ENCODE measurements at regions of chr15 and their contacts with region 1.

Region 1: DNA sequence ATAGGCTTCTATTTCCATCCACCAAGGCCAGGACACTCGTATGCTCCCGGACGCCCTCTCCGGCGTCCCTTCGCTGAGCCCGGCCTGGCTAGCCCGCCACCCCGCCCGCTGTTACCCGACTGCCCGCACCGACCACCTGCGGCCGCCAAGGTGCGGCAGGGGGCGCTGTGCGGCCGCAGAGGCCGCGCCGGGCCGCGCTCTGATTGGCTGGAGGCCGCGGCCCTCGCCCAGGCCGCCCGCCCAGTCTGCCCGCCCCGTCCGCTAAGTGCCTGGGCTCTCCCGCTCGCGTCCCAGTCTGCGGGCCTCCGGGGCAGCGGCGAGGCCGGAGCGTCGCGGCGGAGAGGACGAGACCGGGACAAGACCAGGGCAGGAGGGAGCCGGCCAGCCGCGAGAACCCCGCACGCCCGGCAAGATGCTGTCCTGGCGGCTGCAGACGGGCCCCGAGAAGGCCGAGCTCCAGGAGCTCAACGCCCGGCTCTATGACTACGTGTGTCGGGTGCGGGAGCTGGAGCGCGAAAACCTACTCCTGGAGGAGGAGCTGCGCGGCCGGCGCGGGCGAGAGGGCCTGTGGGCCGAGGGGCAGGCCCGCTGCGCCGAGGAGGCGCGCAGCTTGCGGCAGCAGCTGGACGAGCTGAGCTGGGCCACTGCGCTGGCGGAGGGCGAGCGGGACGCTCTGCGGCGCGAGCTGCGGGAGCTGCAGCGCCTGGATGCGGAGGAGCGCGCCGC is at the start of gene SYNM:
- DNase-seq: peak; percentile 85
- ATAC-seq: peak; percentile 80
- total RNA-seq, gene SYNM: 33.7 TPM

Region 2: DNA sequence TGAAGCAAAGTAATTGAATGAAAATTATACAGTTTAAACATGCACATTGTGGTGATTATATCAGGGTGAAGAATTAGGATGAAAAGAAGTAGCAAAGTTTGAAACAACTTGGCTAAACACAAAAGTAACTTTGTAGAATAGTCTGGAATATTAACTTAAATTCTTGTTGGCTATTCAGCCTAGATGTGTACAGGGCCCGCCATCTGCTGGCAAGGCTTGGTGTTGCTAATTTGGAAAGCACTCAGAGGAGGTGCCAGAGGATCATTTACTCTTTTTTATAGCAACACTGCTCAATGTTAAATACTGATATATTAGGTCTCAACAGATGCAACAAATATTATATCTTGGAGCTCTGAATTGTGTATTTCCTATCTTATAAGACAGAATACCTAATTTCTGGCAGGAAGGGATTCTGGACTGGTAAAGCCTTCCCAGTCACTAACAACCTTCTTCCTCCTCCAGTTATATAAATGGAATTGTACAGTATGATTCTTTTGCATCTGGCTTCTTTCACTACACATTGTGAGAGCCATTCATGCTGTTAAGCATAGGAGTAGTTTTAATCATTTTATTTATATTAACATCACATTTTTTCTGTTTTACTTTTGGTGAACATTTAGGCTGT is 108.3 kb after region 1 on chr15:
- intact Hi-C with region 1: loop called (anchors 5 kb)
- DNase-seq: peak; percentile 92
- ATAC-seq: peak; percentile 88

Region 3: DNA sequence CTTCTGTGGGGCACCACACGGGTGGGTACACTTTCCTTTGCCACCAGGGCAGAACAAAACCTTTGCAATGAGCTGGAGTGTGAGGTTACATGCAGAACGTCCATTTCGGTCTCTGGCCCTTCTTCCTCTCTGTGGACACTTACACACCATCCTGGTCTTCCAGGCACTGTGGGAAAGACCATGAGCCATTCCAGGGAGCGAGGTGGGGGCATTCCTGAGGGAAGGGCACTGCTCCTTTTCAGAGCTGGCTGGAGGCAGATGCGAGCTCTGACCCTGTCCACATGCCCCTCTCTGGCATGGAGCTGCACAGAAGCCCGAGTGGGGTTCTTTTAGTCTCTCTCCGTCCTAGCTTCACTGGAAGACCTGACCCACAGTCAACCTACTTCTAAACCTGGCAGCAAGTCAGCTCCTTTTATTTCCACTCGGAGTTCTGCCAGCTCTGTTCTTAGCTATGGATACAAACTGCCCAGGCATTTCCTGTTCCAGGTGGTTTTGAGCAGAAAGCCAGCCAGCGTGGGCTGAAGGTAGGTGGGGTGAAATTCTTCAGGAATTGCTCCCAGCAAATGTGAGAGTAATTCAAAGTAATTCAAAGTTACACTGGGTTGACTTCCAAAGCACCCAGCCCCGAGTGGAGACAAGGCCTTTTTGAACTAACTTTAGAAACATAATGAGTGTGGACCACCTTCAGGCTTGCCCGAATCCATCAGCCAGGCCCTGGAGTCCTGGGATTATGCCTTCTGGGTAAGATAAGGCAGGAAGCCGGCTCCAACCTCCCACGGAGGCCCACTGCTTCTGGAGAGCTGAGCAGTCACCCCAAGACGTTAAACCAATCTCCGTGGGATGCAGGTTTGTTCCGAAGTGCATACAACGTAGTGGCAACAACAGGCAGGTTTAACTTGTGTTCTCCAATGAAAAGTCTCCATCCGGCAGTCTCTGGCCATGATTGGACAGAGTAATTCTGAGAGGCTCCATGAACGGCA is 955.6 kb after region 1 on chr15:
- intact Hi-C with region 1: no loop called
- DNase-seq: no peak
- ATAC-seq: no peak

Region 4: GRCh38 chr15:100383302-100384107 is 1278.6 kb after region 1 on chr15:
- intact Hi-C with region 1: loop called (anchors 5 kb)
- DNase-seq: no peak
- ATAC-seq: peak; percentile 67

Measured in sciatic nerve (tissue), 2 donors.